Cardiac septum (tissue), 1 donor: ENCODE measurements at regions of chr17 and their contacts with region 1.

Region 1: DNA sequence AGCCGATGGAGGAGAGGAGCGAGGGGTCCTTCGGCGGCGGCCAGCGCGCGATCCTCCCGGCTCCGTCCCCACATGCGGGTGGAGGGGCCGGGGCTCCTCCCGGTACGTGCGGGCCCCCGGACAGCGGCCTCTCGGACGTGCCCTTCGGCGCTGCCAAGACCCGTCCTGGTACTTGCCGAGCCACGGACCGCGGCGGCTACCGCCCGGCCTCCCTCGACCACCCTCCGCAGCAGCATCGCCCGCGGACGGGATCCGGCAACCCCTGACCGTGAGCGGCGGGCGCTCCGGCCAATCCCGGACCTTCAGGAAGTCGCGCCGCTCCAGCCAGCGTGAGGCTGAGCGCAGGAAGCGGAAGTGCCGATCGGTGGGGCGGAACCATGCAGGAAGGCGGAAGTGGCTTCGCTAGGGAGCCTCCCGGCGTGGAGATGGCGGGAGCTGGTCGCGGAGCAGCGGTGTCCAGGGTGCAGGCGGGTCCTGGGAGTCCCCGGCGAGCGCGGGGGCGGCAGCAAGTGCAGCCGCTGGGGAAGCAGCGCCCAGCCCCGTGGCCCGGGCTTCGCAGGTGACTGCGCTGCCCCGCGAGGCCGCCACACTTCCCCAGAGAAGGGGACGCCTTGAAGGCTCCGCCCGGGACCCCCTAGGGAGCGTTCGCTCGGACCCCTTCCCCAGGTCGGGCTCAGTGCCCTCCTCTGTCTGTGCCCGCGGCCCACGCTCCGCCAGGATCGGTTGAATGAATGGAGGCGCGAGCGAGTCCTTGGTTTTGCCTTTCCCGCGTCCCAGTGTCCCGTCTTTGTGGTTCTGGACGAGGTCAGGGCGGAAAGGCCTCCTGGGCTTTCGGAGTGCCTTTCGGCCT is at the starts of genes CCDC137 and OXLD1:
- DNase-seq: peak; percentile 97
- total RNA-seq, gene CCDC137: 8.2 TPM
- total RNA-seq, gene OXLD1: 17.9 TPM

Region 2: DNA sequence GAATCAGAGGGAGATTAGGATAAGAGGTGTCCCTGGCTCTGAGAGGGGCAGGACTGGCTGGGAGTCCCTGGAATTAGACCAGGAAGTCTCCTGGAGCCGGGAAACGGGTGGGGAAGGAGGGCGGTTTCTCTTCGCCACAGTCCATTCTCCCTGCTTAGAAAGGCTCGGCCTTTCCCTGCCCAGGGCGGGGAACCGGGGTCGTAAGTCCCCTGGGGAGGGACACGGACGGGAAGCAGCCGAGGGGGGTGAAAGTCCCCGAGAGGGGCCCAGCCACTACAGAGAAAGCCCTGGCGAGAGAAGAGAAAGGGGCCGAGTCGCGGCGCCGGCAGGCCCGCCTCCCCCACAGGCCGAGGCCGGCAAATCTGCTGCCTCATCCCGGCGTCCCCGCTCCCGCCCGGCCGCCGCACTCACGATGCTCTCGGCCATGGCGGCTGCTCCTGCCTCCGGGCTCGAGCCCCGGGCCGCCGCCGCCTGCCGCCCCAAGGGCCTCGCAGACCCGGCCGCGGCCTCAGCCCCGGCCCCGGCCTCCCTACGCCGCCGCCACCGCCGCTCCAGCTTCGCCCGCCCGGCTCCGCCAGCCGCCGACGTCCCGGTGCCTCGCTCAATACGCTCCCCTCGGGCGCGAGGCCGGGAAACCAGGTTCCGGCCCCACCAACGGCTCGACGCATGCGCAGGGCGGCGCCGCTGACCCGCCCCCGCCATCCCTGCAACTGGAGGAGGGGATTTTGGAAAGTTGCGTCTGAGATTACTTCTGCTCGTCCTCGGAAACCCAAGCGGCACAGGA is 29.9 kb before region 1 on chr17 and contains the starts of genes NPLOC4 and TSPAN10:
- intact Hi-C with region 1: loop called (anchors 2 kb)
- DNase-seq: peak; percentile 95
- total RNA-seq, gene NPLOC4: 107 TPM
- total RNA-seq, gene TSPAN10: 0.30 TPM

Region 3: DNA sequence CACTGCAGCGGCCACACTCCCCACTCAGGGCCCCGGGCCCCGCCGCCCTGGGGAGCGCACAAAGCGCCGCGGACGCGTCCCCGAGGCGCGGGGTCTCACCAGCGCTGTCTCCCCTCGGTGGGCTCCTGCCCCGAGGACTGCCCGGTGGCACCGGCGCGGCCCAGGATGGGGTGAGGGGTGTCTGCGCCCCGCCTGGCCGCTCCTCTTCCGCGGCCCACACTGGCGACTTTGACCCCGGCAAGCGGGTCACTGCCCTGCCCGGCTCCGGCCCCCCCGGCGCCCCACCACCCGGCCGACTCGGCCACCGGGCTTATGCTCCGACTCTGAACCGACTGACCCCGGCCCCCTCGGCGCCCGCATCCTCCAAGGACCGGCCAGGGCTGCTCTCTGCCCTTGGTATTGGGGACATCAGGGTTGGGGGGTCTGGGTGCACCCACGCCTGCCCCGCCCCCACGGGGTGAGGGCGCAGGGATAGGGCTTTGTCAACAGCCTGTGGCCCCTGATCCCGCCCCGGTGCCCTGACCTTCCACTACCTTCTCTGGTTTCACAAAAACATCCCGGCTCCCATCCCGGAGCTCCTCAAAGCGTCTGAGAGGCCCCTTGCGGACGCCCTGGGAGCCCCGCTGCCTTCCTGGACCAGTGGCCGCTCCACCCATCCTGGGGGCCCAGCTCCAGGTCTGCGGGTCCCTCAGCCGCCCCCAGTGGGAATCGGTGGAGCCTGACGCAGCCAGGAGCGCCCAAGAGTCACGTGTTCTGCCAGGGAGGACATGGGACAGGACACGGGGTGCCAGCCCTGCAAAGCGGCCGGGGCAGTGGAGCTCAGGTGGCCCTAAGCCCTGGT is 138.2 kb after region 1 on chr17:
- intact Hi-C with region 1: no loop called
- DNase-seq: no peak